PC-3 (cell line): ENCODE measurements at regions of chr13 and their contacts with region 1.

Region 1: DNA sequence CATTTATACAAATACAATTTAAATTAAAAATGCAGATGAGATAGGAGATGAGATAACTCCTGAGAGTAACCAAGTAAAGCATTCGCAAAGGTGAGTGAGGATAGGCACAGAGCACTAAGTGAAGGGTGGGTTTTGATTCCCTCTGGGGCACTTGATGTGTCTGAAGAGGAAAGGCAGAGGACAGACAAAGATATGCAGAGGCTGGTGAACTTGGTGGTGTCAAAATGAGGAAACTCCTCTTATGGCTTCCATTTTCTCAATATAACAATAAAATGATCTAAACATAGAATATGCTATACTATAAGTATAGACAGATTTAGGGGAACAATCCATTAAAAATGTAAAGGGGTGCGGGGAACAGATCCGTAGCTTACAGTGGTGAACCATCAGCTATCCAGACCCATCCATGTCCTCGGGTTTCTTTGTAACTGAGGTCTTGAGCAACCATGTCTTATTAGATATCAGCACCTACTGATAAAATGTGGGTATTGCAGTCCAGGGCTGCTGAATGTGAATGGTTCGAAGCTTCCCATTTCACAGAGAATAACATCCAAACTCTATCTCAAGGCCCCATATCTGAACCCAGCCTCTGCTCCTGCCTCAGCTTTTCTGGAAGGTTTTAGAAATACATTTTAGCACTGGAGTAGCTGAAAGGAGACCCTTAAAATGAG is 73.9 kb upstream of the SLC10A2 start:
- DNase-seq: peak; percentile 42
- ATAC-seq: peak; percentile 58
- H3K4me3 ChIP-seq: no peak overlapping the region
- H3K27ac ChIP-seq: no peak overlapping the region
- H3K4me1 ChIP-seq: no peaks in the 10 kb centered on the region
- H3K27me3 ChIP-seq: peaks cover 34% of the 10 kb centered on the region
- CTCF ChIP-seq: peak; percentile 59

Region 2: GRCh38 chr13:102913914-102914313 is 226.2 kb before region 1 on chr13:
- CTCF ChIA-PET with region 1: no interaction called
- POLR2A ChIA-PET with region 1: no interaction called
- intact Hi-C with region 1: loop called (anchors 1 kb)
- DNase-seq: peak; percentile 55
- ATAC-seq: no peak
- H3K4me3 ChIP-seq: no peak overlapping the region
- H3K27ac ChIP-seq: no peak overlapping the region
- H3K4me1 ChIP-seq: peaks cover 30% of the 10 kb centered on the region
- H3K27me3 ChIP-seq: no peaks in the 10 kb centered on the region
- CTCF ChIP-seq: no peak